Activated CD4-positive, alpha-beta T cell treated with anti-CD3 and anti-CD28 coated beads for 36 hours (primary cell): ENCODE measurements at regions of chr12 and their contacts with region 1.

Region 1: DNA sequence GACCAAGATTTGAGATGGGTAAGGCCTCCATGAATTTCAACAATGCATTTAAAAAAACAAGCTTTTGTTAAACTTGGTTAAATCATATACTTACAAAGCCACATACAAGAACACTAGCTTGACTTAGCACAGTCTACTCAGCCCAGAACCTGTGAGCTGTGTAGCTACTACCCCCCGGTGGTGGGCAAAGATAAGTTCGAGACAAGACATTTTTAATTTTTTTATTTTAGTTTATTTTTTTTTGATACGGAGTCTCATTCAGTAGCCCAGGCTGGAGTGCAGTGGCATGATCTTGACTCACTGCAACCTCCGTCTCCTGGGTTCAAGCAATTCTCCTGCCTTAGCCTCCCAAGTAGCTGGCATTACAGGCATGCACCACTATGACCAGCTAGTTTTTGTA is 3.7 kb upstream of the NECAP1 start:
- DNase-seq: peak; percentile 78
- ATAC-seq: peak; percentile 30
- H3K4me3 Mint-ChIP-seq: peak overlapping the region; percentile 10
- H3K27ac Mint-ChIP-seq: peak overlapping the region; percentile 57
- H3K4me1 Mint-ChIP-seq: peaks cover 38% of the 10 kb centered on the region
- H3K27me3 Mint-ChIP-seq: no peaks in the 10 kb centered on the region

Region 2: DNA sequence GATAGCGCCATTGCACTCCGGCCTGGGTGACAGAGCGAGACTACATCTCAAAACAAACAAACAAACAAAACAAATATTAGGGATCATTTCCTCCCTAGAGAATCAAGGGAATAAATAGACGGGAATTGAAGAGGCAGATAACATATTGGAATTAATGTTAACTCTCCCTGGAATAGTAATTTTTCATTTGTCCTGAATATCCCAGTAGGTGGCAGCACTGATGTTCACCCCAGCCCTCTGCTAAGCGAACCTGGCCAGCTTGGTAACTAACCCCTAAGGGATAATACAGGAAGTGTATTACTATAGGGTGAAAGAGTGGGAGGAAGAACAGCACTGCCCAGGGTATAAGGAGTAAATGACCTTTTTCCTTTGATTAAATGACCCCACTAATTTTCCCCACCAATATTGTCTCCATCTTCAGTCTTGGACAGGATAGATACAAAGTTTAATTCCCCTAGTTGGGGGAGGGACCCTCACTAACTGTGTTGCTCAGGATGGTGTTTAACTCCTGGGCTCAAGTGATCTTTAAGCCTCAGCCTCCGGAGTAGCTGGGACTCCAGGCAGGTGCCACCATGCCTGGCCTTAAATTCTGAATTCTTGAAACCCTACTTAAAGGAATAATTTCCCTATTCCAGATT is 246.2 kb before region 1 on chr12:
- CTCF ChIA-PET with region 1: interaction called, 9 read pairs
- POLR2A ChIA-PET with region 1: no interaction called
- intact Hi-C with region 1: loop called in 1 of 2 experiments (anchors 5 kb)
- DNase-seq: peak; percentile 61
- ATAC-seq: peak; percentile 92
- H3K4me3 Mint-ChIP-seq: no peak overlapping the region
- H3K27ac Mint-ChIP-seq: no peak overlapping the region
- H3K4me1 Mint-ChIP-seq: peaks cover 3% of the 10 kb centered on the region
- H3K27me3 Mint-ChIP-seq: no peaks in the 10 kb centered on the region

Region 3: GRCh38 chr12:7959701-7960121 is 118.7 kb before region 1 on chr12:
- CTCF ChIA-PET with region 1: interaction called, 12 read pairs
- POLR2A ChIA-PET with region 1: interaction called, 8 read pairs
- intact Hi-C with region 1: loop called in 1 of 2 experiments (anchors 1 kb)
- DNase-seq: peak; percentile 60
- ATAC-seq: peak; percentile 34
- H3K4me3 Mint-ChIP-seq: peak overlapping the region; percentile 86
- H3K27ac Mint-ChIP-seq: peak overlapping the region; percentile 94
- H3K4me1 Mint-ChIP-seq: peaks cover 30% of the 10 kb centered on the region
- H3K27me3 Mint-ChIP-seq: no peaks in the 10 kb centered on the region

Region 4: DNA sequence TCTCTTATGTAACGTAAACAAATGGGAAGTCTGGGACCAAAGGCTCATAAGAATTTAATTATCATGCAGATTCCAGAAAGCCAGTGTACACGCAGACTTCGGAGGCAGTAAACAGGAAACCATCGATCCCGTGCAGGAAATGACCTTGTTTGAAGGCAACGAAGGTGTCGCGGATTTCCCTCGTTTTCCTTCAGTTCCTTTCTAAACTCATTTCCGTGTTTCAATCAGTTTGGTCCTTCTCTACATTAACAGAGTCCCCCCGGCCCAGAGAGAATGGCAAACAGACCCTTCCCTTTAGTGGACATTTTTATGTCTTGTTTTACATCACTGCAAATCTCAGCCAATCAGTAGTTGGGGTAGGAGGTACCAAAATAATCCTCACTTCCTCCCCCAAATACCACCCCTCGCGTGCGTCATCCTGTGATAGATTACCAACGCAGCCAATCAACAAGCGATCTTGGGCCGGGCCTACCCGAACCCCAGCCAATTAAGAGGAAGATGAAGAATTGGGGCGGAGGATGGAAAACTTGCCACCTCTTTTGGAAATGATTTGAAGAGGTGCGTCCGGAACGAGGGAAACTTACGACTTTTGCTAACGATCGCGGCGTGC is 52.0 kb before region 1 on chr12:
- CTCF ChIA-PET with region 1: interaction called, 8 read pairs
- POLR2A ChIA-PET with region 1: interaction called, 4 read pairs
- intact Hi-C with region 1: loop called (anchors 1 kb)
- DNase-seq: peak; percentile 98
- ATAC-seq: peak; percentile 97
- H3K4me3 Mint-ChIP-seq: peak overlapping the region; percentile 92
- H3K27ac Mint-ChIP-seq: peak overlapping the region; percentile 97
- H3K4me1 Mint-ChIP-seq: peaks cover 11% of the 10 kb centered on the region
- H3K27me3 Mint-ChIP-seq: no peaks in the 10 kb centered on the region

Region 5: DNA sequence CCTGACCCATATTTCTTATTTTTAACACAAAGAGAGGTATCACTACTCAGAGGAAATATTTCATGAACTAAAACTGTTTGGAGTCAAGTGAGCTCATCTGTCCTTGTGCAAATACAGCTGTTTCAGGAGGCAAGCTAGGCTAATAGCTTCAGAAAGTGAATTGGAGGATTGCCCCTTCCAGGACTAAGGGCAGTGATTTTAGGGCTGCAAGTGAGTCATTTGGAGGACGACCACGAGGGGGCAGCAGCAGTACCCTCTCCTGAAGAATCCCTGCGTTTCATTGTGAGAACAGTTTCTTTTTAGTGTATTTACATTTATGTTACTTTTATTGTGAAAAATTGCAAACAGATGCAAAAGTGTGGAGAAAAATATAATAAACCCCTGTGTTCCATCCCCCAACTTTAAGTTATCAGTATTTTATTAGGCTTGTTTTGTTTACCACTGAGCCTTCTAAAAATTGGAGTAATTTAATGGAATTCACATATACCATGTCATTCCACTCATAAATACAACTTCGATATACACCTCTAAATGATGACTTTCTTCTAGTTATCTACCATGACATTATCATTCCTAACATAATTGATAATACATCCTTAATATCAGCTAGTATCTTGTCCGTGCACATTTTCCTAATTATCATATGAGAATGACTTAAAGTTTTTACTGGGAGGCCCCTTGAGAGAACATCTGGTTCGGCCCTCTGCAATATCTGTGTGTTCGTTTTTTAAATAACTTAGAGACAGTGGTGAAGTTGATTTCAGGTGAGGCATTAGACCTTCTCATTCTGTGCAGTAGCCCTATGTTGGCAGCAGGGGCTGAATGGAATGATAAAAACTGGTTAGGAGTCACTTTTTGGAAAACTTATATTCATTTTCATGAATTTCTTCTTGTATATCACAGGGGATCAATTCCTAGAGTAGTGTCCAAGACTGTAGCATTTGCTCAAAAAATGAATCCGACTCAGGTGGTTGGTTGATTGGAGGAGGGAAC is 32.1 kb before region 1 on chr12:
- CTCF ChIA-PET with region 1: interaction called, 105 read pairs
- POLR2A ChIA-PET with region 1: interaction called, 3 read pairs
- intact Hi-C with region 1: loop called (anchors 1 kb)
- DNase-seq: peak; percentile 90
- ATAC-seq: peak; percentile 72
- H3K4me3 Mint-ChIP-seq: no peak overlapping the region
- H3K27ac Mint-ChIP-seq: no peak overlapping the region
- H3K4me1 Mint-ChIP-seq: peaks cover 15% of the 10 kb centered on the region
- H3K27me3 Mint-ChIP-seq: no peaks in the 10 kb centered on the region

Region 6: DNA sequence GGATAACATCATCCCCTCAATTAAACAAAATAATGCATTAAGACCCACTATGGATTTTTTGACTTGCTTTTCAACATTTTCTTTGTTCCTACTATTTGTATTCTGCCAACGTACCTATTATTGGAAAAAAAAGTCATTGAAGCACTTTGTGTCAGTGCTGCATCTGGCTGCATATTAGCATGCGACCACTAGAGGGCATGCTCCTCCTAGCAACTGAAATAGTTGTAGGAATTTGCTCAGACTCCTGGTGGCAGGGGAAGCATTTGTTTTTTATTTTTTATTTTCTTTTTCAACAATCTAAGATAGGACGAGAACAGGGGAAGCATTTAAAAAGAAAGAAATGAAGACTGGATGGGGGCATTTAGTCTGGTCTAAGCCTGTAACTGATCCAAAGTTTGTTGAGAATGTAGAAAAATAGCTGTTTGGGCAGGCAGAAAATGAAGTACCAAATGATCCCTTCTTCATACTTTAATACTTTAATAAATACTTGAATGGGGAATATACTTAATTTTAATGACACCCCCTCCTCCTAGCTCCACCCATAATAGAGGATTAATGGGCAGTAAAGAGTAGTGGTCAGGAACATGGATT is 30.5 kb after region 1 on chr12:
- CTCF ChIA-PET with region 1: interaction called, 10 read pairs
- POLR2A ChIA-PET with region 1: no interaction called
- intact Hi-C with region 1: no loop called
- DNase-seq: peak; percentile 89
- ATAC-seq: peak; percentile 85
- H3K4me3 Mint-ChIP-seq: no peak overlapping the region
- H3K27ac Mint-ChIP-seq: peak overlapping the region; percentile 22
- H3K4me1 Mint-ChIP-seq: peaks cover 3% of the 10 kb centered on the region
- H3K27me3 Mint-ChIP-seq: no peaks in the 10 kb centered on the region